Posterior vena cava (tissue), 2 donors: ENCODE measurements at regions of chr1 and their contacts with region 1.

Region 1: DNA sequence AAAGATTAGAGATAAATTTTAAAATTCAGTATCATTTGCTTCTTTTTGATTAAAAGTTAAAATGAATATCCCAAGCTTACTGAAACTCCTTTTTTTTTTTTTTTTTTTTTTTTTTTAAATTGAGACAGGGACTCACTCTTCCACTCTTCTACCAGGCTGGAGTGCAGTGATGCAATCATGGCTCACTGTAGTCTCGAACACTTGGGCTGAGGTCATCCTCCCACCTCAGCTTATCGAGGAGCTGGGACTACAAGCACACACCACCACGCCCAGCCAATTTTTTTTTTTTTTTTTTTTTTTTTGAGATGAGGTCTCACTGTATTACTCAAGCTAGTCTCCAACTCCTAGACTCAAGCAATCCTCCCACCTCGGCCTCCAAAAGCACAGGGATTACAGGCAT is 92.1 kb upstream of the RGS18 start:
- DNase-seq: no peak

Region 2: DNA sequence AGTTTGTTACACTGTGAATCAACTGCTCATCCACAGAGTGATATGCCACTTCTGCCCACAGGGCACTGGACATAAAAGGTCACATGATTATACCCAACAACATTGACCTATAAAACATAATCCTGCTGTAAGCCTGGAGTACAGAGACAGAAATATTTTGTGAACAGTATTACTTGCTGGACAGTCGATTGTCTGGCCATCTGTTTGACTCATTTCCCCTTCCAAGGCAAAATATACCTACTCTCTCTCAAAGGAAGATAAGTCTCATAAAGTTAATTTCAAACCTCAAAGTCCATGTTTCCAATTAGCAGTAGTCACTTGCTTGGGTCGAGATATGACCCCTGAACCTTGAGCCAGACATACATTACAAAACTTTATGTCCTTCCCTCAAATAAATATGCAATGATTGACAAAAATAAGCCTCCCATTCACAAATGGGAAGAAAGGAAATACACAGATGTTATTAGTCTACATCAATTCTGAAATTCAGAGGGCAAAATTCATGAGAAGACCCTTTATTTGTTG is 52.7 kb after region 1 on chr1:
- intact Hi-C with region 1: loop called in 1 of 2 experiments (anchors 2 kb)
- DNase-seq: no peak